ENCODE measurements at regions of chr2 and their contacts with region 1.

Region 1: GRCh38 chr2:173027181-173028128 is 48.2 kb upstream of the MAP3K20 start:
- DNase-seq: peak in 2 of 3 donors; percentile 49 to 97
- ATAC-seq: peak; percentile 88
- H3K4me3 ChIP-seq: no peak overlapping the region
- H3K4me1 ChIP-seq: peaks cover 14% of the 10 kb centered on the region
- CTCF ChIP-seq: peak; percentile 91

Region 2: GRCh38 chr2:173134703-173135102 is 107.2 kb after region 1 on chr2:
- intact Hi-C with region 1: no loop called
- DNase-seq: no peak
- ATAC-seq: no peak
- H3K4me3 ChIP-seq: no peak overlapping the region
- H3K4me1 ChIP-seq: no peaks in the 10 kb centered on the region
- CTCF ChIP-seq: no peak

Region 3: DNA sequence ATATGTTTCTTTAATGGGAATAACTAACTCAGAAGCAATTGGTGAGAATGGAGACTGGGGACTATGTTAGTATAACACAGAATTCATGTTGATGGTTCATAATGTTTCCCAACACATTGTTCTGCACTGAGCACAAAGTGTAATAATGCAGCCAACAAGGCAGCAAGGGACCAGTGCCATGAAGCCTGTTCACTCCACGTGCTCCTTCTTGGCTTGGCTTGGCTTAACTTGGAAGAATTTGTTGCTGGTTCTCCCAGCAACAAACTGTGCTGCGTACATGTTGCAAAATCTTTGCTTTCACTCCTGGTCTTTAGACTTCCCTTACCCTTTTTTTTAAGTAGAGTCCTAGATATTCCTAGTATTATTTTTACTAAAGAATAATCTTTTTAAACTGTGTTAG is 177.9 kb after region 1 on chr2:
- intact Hi-C with region 1: loop called (anchors 5 kb)
- DNase-seq: peak in 1 of 3 donors; percentile 43
- ATAC-seq: peak; percentile 56
- H3K4me3 ChIP-seq: no peak overlapping the region
- H3K4me1 ChIP-seq: no peaks in the 10 kb centered on the region
- CTCF ChIP-seq: no peak

Region 4: DNA sequence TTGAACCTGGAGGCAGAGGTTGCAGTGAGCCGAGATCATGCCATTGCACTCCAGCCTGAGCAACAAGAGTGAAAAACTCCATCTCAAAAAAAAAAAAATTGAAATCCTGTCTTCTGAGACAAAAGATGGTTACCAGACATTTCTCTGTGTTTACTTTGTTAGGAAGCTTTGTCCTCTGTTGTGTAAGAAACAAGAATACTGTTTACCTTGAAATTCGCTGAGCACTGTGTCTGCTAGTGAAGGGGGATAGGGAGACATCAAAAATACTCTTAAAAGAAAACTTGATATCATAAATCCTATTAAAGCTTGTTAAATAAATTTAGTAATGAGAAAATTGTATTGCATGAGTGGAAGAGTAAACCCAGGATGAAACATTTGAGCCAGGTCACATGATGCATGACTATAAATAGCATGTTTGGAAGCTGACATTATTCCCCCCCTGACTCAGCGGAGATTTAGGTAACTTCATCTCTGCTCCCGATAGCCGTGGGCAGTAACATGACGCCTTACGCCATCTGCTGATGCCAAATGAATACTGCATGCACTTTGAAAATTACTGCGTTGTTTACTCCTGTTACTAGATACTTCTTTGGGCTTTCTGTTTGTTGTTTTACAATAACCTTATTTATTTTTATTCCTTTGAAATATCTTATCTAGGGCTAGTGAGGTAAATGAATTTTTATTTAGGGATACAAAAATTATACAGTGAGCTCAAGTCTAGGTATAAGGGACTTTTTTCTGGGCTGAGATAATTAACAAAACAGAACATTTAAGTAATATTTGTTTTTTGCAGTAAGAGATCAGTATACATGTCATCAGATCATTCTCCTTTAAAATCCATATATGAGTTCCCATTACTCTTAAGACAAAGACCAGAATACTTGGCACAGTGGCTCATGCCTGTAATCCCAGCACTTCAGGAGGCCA is 183.1 kb after region 1 on chr2:
- intact Hi-C with region 1: loop called (anchors 5 kb)
- DNase-seq: peak in 1 of 3 donors; percentile 79
- ATAC-seq: peak; percentile 93
- H3K4me3 ChIP-seq: no peak overlapping the region
- H3K4me1 ChIP-seq: peaks cover 3% of the 10 kb centered on the region
- CTCF ChIP-seq: peak; percentile 64

Measured in mucosa of descending colon (tissue), 3 donors.